Esophagus muscularis mucosa (tissue), 4 donors: ENCODE measurements at regions of chr9 and their contacts with region 1.

Region 1: DNA sequence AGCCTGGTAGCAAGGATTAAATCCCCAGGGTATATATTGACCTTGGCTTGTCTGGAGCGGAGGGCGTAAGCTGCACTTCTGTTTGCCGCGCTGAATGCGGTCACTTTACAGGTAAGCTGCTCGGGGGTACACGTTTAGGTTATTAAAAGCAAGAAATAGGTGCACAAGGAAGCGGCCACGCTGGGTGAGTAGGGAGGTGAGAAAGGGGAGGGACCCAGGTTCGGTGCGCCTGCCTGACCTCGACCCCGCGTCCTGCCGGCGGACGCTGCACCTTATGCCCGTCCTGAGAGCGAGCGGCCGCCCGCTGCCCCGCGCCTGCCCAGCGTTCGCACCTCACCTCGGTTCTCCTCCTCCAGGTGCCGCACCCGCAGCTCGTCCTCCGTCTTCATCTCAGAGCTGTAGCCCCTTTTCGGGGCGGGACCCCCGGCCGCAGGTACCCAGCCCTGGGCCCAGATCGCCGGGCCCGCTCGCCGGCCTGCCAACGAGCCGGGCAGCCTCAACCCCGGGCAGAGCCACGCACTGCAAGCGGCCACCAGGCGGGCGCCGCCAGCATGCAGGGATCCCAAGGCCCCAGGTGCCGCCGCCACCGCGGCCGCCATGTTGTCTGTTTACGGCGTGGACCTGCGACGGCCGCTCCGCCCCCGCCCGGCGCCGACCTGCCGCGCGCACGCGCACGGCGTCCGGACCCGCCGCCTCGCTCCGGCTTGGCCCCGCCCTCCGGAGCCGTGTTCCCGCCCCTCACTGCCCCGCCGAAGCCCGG is at the start of gene AUH:
- DNase-seq: peak; percentile 93
- H3K4me3 ChIP-seq: peak within 1 kb of the TSS; percentile 77 to 99 (median 98)
- H3K27ac ChIP-seq: peak within 1 kb of the TSS; percentile 85 to 95 (median 88)
- H3K4me1 ChIP-seq: peaks cover 14 to 40% (median 32%) of the 10 kb centered on the region in 4 donors
- H3K27me3 ChIP-seq: no peaks in the 10 kb centered on the region
- CTCF ChIP-seq: no peak
- EP300 ChIP-seq: no peak
- POLR2A ChIP-seq: no peak
- total RNA-seq, gene AUH: 17.7 to 29.9 (median 22.3) TPM

Region 2: GRCh38 chr9:91098213-91098850 is 263.1 kb before region 1 on chr9:
- intact Hi-C with region 1: loop called (anchors 5 kb)
- DNase-seq: no peak
- H3K4me3 ChIP-seq: no peak overlapping the region
- H3K27ac ChIP-seq: no peak overlapping the region
- H3K4me1 ChIP-seq: peaks cover 25 to 40% (median 33%) of the 10 kb centered on the region in 4 donors
- H3K27me3 ChIP-seq: no peaks in the 10 kb centered on the region
- CTCF ChIP-seq: no peak
- EP300 ChIP-seq: no peak
- POLR2A ChIP-seq: no peak

Region 3: DNA sequence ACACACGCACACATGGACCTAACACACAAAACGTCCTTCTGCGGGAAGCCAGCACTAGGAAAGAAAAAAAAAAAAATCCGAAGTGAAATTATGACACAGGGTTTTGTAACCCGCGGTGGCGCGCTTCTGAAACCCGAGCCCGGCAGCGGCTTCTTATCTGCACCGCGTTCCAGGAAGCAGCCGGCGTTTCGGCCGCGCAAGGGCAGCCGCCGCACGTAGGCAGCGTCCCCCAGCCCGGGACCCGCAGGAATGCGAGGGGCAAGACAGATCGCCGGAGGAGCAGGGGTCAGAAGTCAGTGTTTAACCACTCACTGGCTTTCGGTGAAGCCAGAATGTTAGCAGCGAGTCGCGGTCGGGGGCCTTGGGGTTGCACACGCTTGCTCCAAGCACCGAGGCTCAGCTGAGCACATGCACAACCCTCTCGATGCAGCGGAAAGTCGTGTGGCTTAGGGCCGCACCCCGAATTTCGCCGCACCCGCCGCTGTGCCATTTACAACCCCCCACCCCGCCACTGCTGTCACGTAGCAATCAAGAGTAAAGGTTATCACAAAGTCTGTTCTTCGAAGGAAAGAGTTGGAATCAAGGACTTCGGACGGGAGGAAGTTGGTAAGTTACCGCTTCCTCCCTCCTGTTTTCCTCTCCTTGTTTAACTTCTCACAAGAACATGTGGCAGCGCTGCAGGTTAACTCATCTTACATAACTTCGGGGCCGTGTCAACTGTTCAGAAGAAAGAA is 167.6 kb before region 1 on chr9:
- intact Hi-C with region 1: loop called (anchors 5 kb)
- DNase-seq: peak; percentile 95
- H3K4me3 ChIP-seq: peak overlapping the region; percentile 55 to 58 (median 57)
- H3K27ac ChIP-seq: peak overlapping the region; percentile 98 to 100 (median 99)
- H3K4me1 ChIP-seq: peaks cover 53 to 73% (median 72%) of the 10 kb centered on the region in 4 donors
- H3K27me3 ChIP-seq: no peaks in the 10 kb centered on the region
- CTCF ChIP-seq: no peak
- EP300 ChIP-seq: peak; percentile 33
- POLR2A ChIP-seq: peak; percentile 72

Region 4: GRCh38 chr9:91221332-91221731 is 140.1 kb before region 1 on chr9:
- intact Hi-C with region 1: no loop called
- DNase-seq: no peak
- H3K4me3 ChIP-seq: no peak overlapping the region
- H3K27ac ChIP-seq: peak overlapping the region in 3 of 4 donors; percentile 40 to 64 (median 61)
- H3K4me1 ChIP-seq: peaks cover 0 to 15% (median 10%) of the 10 kb centered on the region in 4 donors
- H3K27me3 ChIP-seq: no peaks in the 10 kb centered on the region
- CTCF ChIP-seq: no peak
- EP300 ChIP-seq: no peak
- POLR2A ChIP-seq: no peak

Region 5: DNA sequence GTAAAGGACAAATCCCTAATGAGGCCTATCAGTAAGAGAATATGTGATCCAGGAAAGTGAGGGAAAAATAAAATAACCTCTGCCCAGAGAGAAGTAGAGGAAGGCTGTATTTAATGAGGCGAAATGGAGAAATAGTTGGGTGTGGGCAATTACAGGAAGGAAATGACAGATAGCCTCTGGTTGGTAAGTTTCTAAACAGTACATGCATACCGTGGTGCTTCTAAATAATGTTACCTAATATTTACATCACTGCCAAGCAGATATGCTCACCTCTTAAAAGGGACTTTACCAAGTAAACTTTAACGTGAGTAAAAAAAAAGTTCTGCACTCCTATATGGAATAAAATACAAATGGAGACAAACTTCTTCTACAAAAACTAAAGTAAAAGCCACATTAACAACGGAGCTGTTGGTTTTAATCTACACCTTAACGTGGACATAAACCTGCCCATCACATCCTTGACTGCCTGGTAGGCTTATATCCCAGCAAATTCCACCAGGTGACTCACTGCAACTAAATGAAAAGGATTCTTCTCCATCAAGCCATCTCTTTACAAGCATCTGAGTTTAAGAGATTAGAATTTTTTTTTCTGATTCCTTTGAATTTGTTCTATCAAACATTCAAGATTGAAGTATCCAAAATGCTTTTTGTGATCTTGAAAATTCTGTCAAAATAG is 49.8 kb after region 1 on chr9:
- intact Hi-C with region 1: loop called (anchors 5 kb)
- DNase-seq: peak; percentile 5
- H3K4me3 ChIP-seq: no peak overlapping the region
- H3K27ac ChIP-seq: no peak overlapping the region
- H3K4me1 ChIP-seq: peaks cover 4 to 22% (median 16%) of the 10 kb centered on the region in 4 donors
- H3K27me3 ChIP-seq: no peaks in the 10 kb centered on the region
- CTCF ChIP-seq: no peak
- EP300 ChIP-seq: no peak
- POLR2A ChIP-seq: no peak

Region 6: GRCh38 chr9:91422758-91423711 is 61.6 kb after region 1 on chr9:
- intact Hi-C with region 1: loop called (anchors 5 kb)
- DNase-seq: peak; percentile 95
- H3K4me3 ChIP-seq: peak overlapping the region; percentile 61 to 90 (median 82)
- H3K27ac ChIP-seq: peak overlapping the region; percentile 91 to 99 (median 94)
- H3K4me1 ChIP-seq: peaks cover 15 to 59% (median 51%) of the 10 kb centered on the region in 4 donors
- H3K27me3 ChIP-seq: no peaks in the 10 kb centered on the region
- CTCF ChIP-seq: peak in 1 of 3 experiments; percentile 47
- EP300 ChIP-seq: peak; percentile 88
- POLR2A ChIP-seq: peak; percentile 42